ENCODE measurements at regions of chr5 and their contacts with region 1.

Region 1: DNA sequence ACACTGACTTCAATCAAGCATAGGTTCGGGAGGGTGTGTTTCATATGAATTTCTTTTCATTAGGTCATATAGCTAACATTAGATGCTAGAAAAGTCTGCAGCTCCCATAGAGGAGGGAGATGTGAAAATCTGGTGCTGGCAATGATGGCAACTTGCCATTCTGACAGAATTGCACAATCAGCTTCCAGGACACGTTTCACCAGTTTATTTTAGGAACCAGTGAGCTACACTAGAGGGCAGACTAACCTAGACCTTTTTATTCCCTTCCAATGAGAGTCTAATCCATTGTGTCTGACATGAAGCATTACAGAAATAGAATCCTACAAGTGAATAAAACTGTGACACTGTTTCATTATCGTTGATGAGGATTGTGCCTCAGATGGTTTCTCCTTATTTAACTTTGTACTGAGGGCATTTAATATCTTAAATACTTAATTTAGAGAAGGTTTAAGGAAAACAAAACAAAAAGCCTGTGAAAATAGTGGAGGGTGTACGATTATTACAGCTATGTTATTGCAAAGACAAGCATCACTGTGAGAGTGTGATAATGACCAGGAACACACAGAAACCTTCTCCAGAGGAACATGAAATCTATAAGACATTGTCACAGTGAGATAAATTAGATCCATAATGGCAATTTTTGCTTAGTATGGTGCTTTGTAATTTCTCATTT is 363.3 kb upstream of the RPS23 start:
- DNase-seq: peak in 5 of 9 donors; percentile 11 to 33 (median 18)
- ATAC-seq: peak; percentile 70
- H3K4me3 ChIP-seq: no peak overlapping the region
- H3K4me3 Mint-ChIP-seq: no peak overlapping the region
- H3K27ac ChIP-seq: no peak overlapping the region
- H3K27ac Mint-ChIP-seq: no peak overlapping the region
- H3K4me1 ChIP-seq: no peaks in the 10 kb centered on the region
- H3K4me1 Mint-ChIP-seq: peaks cover 0 to 19% (median 0%) of the 10 kb centered on the region in 7 donors
- H3K27me3 ChIP-seq: no peaks in the 10 kb centered on the region
- H3K27me3 Mint-ChIP-seq: peaks cover 0 to 6% (median 0%) of the 10 kb centered on the region in 5 donors

Region 2: DNA sequence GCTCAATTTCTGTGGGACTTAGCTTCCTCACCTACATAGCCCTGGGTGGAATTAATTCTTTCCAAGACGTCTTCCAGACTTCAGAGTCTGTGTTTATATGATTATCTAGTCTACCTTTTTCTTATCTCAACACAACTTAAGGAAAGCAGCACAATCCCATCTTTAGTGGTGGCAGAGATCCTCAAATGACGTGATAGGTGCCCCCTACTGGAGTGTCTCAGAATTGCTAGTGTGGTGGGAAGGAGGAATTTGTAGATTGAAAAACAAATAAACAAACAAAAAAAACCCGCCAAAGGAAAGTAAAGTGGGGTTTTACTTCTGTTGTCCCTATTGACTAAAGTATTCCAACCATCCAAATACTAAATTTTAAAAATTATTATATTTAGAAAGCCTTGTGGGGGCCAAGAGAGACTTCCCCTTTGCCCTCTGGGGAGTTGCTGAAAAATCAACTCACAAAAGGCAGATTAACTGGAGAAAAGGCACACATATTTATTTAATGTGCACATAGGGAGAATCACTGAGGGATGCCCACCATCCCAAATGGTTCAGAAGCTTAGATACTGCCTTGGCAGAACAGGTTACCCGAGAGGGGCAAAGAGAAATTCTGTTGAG is 152.4 kb after region 1 on chr5:
- CTCF ChIA-PET with region 1: no interaction called
- POLR2A ChIA-PET with region 1: no interaction called
- intact Hi-C with region 1: loop called (anchors 1 to 5 kb)
- DNase-seq: peak in 6 of 9 donors; percentile 14 to 31 (median 22)
- ATAC-seq: no peak
- H3K4me3 ChIP-seq: no peak overlapping the region
- H3K4me3 Mint-ChIP-seq: no peak overlapping the region
- H3K27ac ChIP-seq: no peak overlapping the region
- H3K27ac Mint-ChIP-seq: no peak overlapping the region
- H3K4me1 ChIP-seq: no peaks in the 10 kb centered on the region
- H3K4me1 Mint-ChIP-seq: peaks cover 0 to 5% (median 0%) of the 10 kb centered on the region in 7 donors
- H3K27me3 ChIP-seq: no peaks in the 10 kb centered on the region
- H3K27me3 Mint-ChIP-seq: peaks cover 0 to 12% (median 3%) of the 10 kb centered on the region in 5 donors

Region 3: DNA sequence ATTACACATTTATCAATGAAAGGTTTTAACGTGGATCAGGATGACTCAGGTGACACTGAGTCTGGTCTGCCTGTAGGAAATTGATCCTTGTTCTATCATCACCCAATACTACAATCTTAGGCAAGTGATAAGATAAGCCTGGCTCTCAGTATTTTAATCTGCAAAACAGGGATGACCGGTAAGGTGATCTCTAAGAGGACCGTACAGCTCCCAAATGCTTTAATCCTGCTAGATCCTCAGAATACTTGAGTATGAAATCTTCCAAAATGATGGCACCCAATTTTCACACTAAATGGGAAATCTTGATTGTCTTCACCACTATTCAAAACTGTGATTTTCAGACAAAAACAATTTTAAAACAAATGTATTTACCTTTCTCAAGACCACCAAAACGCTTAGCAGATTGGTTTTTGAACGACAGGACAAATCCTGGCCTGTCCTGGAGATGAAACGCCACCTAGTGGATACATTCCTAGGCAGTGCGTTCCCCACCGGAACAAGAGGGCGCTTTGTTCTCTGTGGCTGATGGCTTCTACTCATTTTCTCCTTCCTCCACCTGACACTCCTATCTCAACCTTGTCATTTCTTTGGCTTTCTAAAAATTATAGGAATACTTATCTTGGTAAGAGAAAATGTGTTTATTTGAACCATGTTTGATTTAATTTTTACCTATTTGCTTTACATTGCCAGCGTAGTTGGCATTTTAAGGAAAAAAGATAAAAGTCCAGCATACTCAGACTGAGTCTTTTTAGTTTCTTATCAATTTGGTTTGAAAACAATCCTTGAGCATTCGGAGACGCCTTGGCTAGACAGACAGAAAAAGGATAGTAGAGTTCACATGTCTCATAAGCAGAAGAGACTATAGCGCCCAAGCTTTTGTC is 788.9 kb after region 1 on chr5:
- CTCF ChIA-PET with region 1: no interaction called
- POLR2A ChIA-PET with region 1: no interaction called
- intact Hi-C with region 1: loop called in 1 of 2 experiments (anchors 1 kb)
- DNase-seq: peak in 8 of 9 donors; percentile 8 to 52 (median 38)
- ATAC-seq: peak; percentile 79
- H3K4me3 ChIP-seq: no peak overlapping the region
- H3K4me3 Mint-ChIP-seq: no peak overlapping the region
- H3K27ac ChIP-seq: no peak overlapping the region
- H3K27ac Mint-ChIP-seq: no peak overlapping the region
- H3K4me1 ChIP-seq: no peaks in the 10 kb centered on the region
- H3K4me1 Mint-ChIP-seq: peaks cover 0 to 2% (median 0%) of the 10 kb centered on the region in 7 donors
- H3K27me3 ChIP-seq: no peaks in the 10 kb centered on the region
- H3K27me3 Mint-ChIP-seq: peaks cover 0 to 4% (median 0%) of the 10 kb centered on the region in 5 donors

Region 4: GRCh38 chr5:83473346-83474163 is 832.1 kb after region 1 on chr5:
- CTCF ChIA-PET with region 1: no interaction called
- POLR2A ChIA-PET with region 1: no interaction called
- intact Hi-C with region 1: loop called (anchors 1 to 2 kb)
- DNase-seq: peak in 8 of 9 donors; percentile 16 to 60 (median 26)
- ATAC-seq: peak; percentile 66
- H3K4me3 ChIP-seq: peak overlapping the region; percentile 24
- H3K4me3 Mint-ChIP-seq: peak overlapping the region; percentile 78 to 90 (median 84)
- H3K27ac ChIP-seq: no peak overlapping the region
- H3K27ac Mint-ChIP-seq: peak overlapping the region in 1 of 9 donors; percentile 38
- H3K4me1 ChIP-seq: peaks cover 4 to 23% of the 10 kb centered on the region in 2 donors
- H3K4me1 Mint-ChIP-seq: peaks cover 17 to 42% (median 38%) of the 10 kb centered on the region in 7 donors
- H3K27me3 ChIP-seq: peaks cover 0 to 15% of the 10 kb centered on the region in 2 donors
- H3K27me3 Mint-ChIP-seq: peaks cover 73 to 86% (median 80%) of the 10 kb centered on the region in 5 donors

Region 5: GRCh38 chr5:83564069-83564749 is 922.7 kb after region 1 on chr5:
- CTCF ChIA-PET with region 1: interaction called, 3 read pairs
- POLR2A ChIA-PET with region 1: no interaction called
- intact Hi-C with region 1: loop called in 1 of 2 experiments (anchors 1 kb)
- DNase-seq: peak in 5 of 9 donors; percentile 27 to 40 (median 31)
- ATAC-seq: peak; percentile 42
- H3K4me3 ChIP-seq: no peak overlapping the region
- H3K4me3 Mint-ChIP-seq: no peak overlapping the region
- H3K27ac ChIP-seq: no peak overlapping the region
- H3K27ac Mint-ChIP-seq: no peak overlapping the region
- H3K4me1 ChIP-seq: no peaks in the 10 kb centered on the region
- H3K4me1 Mint-ChIP-seq: no peaks in the 10 kb centered on the region
- H3K27me3 ChIP-seq: peaks cover 0 to 4% of the 10 kb centered on the region in 2 donors
- H3K27me3 Mint-ChIP-seq: peaks cover 18 to 34% (median 27%) of the 10 kb centered on the region in 5 donors

Region 6: GRCh38 chr5:83787631-83788030 is 1146.2 kb after region 1 on chr5:
- CTCF ChIA-PET with region 1: no interaction called
- POLR2A ChIA-PET with region 1: no interaction called
- intact Hi-C with region 1: no loop called
- DNase-seq: no peak
- ATAC-seq: no peak
- H3K4me3 ChIP-seq: no peak overlapping the region
- H3K4me3 Mint-ChIP-seq: no peak overlapping the region
- H3K27ac ChIP-seq: no peak overlapping the region
- H3K27ac Mint-ChIP-seq: no peak overlapping the region
- H3K4me1 ChIP-seq: no peaks in the 10 kb centered on the region
- H3K4me1 Mint-ChIP-seq: no peaks in the 10 kb centered on the region
- H3K27me3 ChIP-seq: no peaks in the 10 kb centered on the region
- H3K27me3 Mint-ChIP-seq: peaks cover 0 to 7% (median 0%) of the 10 kb centered on the region in 5 donors

Measured in naive thymus-derived CD4-positive, alpha-beta T cell (primary cell).